Breast epithelium (tissue), 4 donors: ENCODE measurements at regions of chr16 and their contacts with region 1.

Region 1: GRCh38 chr16:12747827-12748226 is 55.9 kb downstream of the CPPED1 start:
- DNase-seq: no peak
- H3K4me3 ChIP-seq: no peak overlapping the region
- H3K27ac ChIP-seq: no peak overlapping the region
- H3K4me1 ChIP-seq: no peaks in the 10 kb centered on the region
- H3K27me3 ChIP-seq: no peaks in the 10 kb centered on the region
- CTCF ChIP-seq: no peak
- POLR2A ChIP-seq: no peak

Region 2: GRCh38 chr16:12803203-12804097 is 55.6 kb after region 1 on chr16 and contains the start of gene CPPED1:
- intact Hi-C with region 1: loop called (anchors 2 kb)
- DNase-seq: peak; percentile 81 to 87
- H3K4me3 ChIP-seq: peak within 1 kb of the TSS; percentile 54 to 77 (median 63)
- H3K27ac ChIP-seq: peak within 1 kb of the TSS; percentile 68 to 92
- H3K4me1 ChIP-seq: no peaks in the 10 kb centered on the region
- H3K27me3 ChIP-seq: no peaks in the 10 kb centered on the region
- CTCF ChIP-seq: no peak
- POLR2A ChIP-seq: peak; percentile 20
- total RNA-seq, gene CPPED1: 9.2 to 23.0 (median 16.4) TPM